SK-N-SH (cell line): ENCODE measurements at regions of chr5 and their contacts with region 1.

Region 1: DNA sequence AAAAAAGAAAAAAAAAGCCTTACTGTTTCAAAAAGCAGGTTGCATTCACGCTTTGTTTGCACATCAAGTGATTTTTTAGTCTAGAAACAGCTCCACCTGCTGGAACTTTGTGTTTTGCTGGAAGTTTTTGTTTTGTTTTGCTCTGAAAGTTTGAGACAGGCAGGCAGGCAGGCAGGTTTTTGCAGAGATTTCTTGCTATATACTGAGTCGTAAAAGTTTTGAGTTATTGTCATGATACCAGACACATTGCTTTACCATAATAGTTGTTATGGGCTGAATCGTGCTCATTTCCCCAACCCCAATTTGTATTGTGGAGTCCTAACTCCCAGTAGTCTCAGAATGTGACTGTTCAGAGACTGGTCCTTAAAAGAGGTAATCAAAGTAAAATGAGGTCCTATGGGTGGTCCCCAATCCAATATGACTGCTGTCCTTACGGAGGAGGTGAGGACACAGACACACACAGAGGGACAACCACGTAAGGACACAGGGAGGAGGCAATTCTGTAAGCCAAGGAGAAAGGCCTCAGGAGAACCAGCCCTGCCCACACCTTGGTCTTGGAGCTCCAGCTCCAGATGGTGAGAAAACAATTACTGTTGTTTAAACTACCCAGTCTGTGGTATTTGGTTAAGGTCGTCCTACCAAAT is 20.9 kb downstream of the OR2Y1 start:
- DNase-seq: peak; percentile 16
- H3K4me3 ChIP-seq: peak overlapping the region in 1 of 2 experiments; percentile 5; a peak in 1 of 4 replicates
- H3K27ac ChIP-seq: no peak overlapping the region
- H3K4me1 ChIP-seq: no peaks in the 10 kb centered on the region
- H3K27me3 ChIP-seq: peaks cover 5% of the 10 kb centered on the region; the same call in 1 of the 2 replicates
- CTCF ChIP-seq: peak; percentile 76
- EP300 ChIP-seq: no peak
- RAD21 ChIP-seq: peak; percentile 47

Region 2: DNA sequence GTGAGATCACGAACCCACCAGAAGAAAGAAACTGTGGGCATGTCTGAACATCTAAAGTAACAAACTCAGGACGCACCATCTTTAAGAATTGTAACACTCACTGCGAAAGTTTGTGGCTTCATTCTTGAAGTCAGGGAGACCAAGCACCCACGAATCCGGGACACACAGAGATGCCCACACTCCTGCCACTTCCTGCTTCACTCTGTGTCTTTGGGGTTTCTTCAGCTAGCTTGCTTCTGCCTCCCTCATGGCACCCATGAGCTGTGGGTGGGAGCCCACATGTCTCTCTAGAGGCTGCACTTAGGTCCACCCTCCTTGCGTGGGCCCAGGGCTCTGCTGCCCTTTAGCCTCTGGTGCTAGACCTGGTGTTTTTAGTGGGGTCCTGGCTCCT is 285.9 kb before region 1 on chr5:
- CTCF ChIA-PET with region 1: no interaction called
- POLR2A ChIA-PET with region 1: no interaction called
- DNase-seq: no peak
- H3K4me3 ChIP-seq: no peak overlapping the region
- H3K27ac ChIP-seq: no peak overlapping the region
- H3K4me1 ChIP-seq: no peaks in the 10 kb centered on the region
- H3K27me3 ChIP-seq: no peaks in the 10 kb centered on the region
- CTCF ChIP-seq: no peak
- EP300 ChIP-seq: no peak
- RAD21 ChIP-seq: no peak

Region 3: GRCh38 chr5:180670586-180671359 is 48.2 kb before region 1 on chr5:
- CTCF ChIA-PET with region 1: interaction called, 12 read pairs
- POLR2A ChIA-PET with region 1: no interaction called
- DNase-seq: peak; percentile 61
- H3K4me3 ChIP-seq: peak overlapping the region in 1 of 2 experiments; percentile 41; a peak in 1 of 4 replicates
- H3K27ac ChIP-seq: no peak overlapping the region
- H3K4me1 ChIP-seq: no peaks in the 10 kb centered on the region; a peak in 1 of 4 replicates
- H3K27me3 ChIP-seq: peaks cover 26% of the 10 kb centered on the region
- CTCF ChIP-seq: peak; percentile 66
- EP300 ChIP-seq: no peak
- RAD21 ChIP-seq: peak; percentile 62

Region 4: DNA sequence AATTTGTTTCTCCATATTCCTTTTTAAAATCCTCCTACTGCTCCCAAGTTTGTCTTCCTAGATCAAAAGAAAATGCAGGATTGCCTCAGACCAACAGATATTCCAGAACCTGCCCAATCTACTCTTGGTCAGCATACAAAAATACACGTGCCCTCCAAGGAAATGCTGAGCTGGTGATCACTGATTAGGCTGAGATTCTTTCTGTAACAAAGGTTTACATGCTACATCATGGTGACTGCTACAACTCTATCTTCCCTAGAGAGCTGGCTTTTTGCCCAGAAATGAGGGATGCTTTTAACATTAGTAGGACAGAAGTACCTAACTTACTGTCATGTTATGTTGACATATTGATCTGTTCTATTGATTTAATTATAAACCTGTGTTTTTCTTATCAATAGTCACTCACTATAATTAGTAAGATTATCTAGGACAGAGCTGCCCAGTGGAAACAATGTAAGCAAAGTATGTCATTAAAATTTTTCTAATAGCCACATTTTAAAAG is 14.5 kb before region 1 on chr5:
- CTCF ChIA-PET with region 1: interaction called, 13 read pairs
- POLR2A ChIA-PET with region 1: no interaction called
- DNase-seq: no peak
- H3K4me3 ChIP-seq: no peak overlapping the region
- H3K27ac ChIP-seq: no peak overlapping the region
- H3K4me1 ChIP-seq: no peaks in the 10 kb centered on the region
- H3K27me3 ChIP-seq: peaks cover 5% of the 10 kb centered on the region; the same call in 1 of the 2 replicates
- CTCF ChIP-seq: no peak
- EP300 ChIP-seq: no peak
- RAD21 ChIP-seq: no peak

Region 5: DNA sequence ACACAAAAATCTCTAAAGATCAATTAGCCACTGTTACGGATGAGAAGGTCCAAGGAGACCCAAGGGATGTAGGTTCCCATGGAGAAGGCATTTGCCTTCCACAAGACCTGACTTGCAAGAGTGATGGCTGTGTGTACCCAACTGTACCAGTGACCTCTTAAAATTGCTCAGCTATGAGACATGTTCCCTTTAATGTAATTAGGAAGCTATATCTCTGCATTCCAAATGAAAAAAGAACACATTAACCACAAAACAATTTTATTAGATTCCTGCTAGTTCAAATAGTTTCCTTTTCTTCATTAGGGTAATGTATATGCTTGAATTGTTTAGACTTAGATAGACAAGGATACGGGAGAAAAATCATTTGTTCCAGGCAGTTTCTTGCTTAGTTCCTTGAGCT is 17.6 kb after region 1 on chr5:
- CTCF ChIA-PET with region 1: interaction called, 23 read pairs
- POLR2A ChIA-PET with region 1: no interaction called
- DNase-seq: no peak
- H3K4me3 ChIP-seq: no peak overlapping the region
- H3K27ac ChIP-seq: no peak overlapping the region
- H3K4me1 ChIP-seq: no peaks in the 10 kb centered on the region
- H3K27me3 ChIP-seq: no peaks in the 10 kb centered on the region; the same call in 1 of the 2 replicates
- CTCF ChIP-seq: no peak
- EP300 ChIP-seq: no peak
- RAD21 ChIP-seq: no peak

Region 6: GRCh38 chr5:180860273-180860886 is 141.4 kb after region 1 on chr5:
- CTCF ChIA-PET with region 1: no interaction called
- POLR2A ChIA-PET with region 1: no interaction called
- DNase-seq: peak; percentile 65
- H3K4me3 ChIP-seq: peak overlapping the region; percentile 87 to 99
- H3K27ac ChIP-seq: peak overlapping the region; percentile 77 to 90
- H3K4me1 ChIP-seq: no peaks in the 10 kb centered on the region; a peak in 2 of 4 replicates
- H3K27me3 ChIP-seq: no peaks in the 10 kb centered on the region
- CTCF ChIP-seq: peak; percentile 42
- EP300 ChIP-seq: no peak
- RAD21 ChIP-seq: no peak; the same call in 1 of the 2 replicates